HepG2 (cell line): ENCODE measurements at regions of chr13 and their contacts with region 1.

Region 1: GRCh38 chr13:39942552-39943273 is 287.3 kb downstream of the COG6 start:
- DNase-seq: peak; percentile 66
- ATAC-seq: peak; percentile 100
- H3K4me3 ChIP-seq: no peak overlapping the region
- H3K27ac ChIP-seq: no peak overlapping the region
- H3K4me1 ChIP-seq: no peaks in the 10 kb centered on the region
- H3K27me3 ChIP-seq: no peaks in the 10 kb centered on the region; a peak in 1 of 5 replicates
- CTCF ChIP-seq: peak; percentile 91
- EP300 ChIP-seq: no peak
- POLR2A ChIP-seq: no peak
- RAD21 ChIP-seq: peak; percentile 79

Region 2: DNA sequence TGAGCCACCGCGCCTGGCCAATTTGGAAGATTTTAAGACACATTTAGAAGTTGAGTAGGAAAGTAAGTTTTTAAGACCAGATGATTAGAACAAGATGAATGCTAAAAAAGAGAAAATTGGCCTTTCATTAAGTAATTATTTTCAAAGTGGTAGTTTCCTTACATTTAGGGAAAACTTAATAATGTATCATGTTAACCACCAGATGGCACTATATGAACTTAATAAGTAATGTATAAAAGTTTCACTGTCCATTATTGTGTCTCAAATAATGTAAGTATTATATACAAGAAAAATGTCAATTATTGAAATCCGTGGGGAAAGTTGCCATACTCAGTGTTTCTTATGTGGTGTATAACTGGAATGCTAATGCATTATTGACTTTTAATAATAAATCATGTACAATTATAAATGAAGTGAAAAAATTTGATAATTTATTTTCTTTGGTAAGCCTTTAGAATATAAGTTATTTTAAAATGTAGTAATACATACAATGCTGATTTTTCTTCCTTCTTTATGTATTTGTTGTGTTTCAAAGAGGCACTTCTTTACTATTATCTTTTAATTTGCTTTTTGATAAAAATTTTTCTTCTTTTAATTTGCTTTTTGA is 258.1 kb before region 1 on chr13:
- CTCF ChIA-PET with region 1: no interaction called
- POLR2A ChIA-PET with region 1: no interaction called
- in situ Hi-C with region 1: no loop called
- intact Hi-C with region 1: loop called (anchors 10 kb)
- DNase-seq: peak; percentile 31
- ATAC-seq: peak; percentile 44; the same call in 1 of the 3 replicates
- H3K4me3 ChIP-seq: no peak overlapping the region
- H3K27ac ChIP-seq: no peak overlapping the region
- H3K4me1 ChIP-seq: no peaks in the 10 kb centered on the region
- H3K27me3 ChIP-seq: no peaks in the 10 kb centered on the region
- CTCF ChIP-seq: peak; percentile 33
- EP300 ChIP-seq: no peak
- POLR2A ChIP-seq: no peak
- RAD21 ChIP-seq: no peak

Region 3: DNA sequence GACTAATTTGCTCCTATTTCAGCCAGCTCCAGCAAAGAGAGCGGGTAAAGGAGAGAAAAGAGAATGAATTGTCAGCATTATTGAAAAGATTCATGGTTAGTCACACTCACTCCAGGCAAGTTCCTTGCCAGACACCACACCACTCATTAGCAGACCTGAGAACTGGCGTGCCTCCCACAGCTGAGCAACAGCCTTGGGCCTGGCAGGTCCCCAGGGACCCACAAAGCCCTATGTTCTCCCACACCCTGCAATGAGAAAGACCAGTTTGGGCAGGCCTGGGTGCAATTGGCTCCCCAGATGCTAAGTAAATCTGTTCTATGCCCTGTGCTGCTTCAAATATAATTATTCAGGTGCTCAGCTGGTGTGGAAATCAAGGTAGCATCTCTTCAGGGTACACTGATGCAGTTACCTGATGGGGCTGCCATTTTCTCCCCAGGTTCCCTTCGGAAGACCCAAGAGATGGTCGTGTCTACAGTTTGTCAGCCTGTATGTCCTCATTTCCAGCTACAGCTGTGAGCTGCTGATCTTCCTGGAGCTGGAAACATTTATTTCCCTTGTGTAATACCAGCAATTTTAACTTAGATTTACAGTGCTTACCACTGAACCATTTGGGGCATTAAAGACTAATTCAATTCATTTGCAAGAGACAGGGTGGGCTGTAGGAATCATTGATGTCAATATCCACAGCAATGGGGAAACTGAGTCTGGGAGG is 117.7 kb after region 1 on chr13:
- CTCF ChIA-PET with region 1: no interaction called
- POLR2A ChIA-PET with region 1: interaction called, 3 read pairs
- in situ Hi-C with region 1: no loop called
- intact Hi-C with region 1: loop called (anchors 5 kb)
- DNase-seq: no peak
- ATAC-seq: 0 out of 3 replicates have a peak, but pooled peaks have one; percentile 12
- H3K4me3 ChIP-seq: no peak overlapping the region
- H3K27ac ChIP-seq: peak overlapping the region; percentile 3
- H3K4me1 ChIP-seq: peaks cover 68% of the 10 kb centered on the region
- H3K27me3 ChIP-seq: no peaks in the 10 kb centered on the region; a peak in 1 of 5 replicates
- CTCF ChIP-seq: no peak
- EP300 ChIP-seq: no peak
- POLR2A ChIP-seq: no peak
- RAD21 ChIP-seq: no peak

Region 4: GRCh38 chr13:40494513-40494912 is 551.8 kb after region 1 on chr13:
- CTCF ChIA-PET with region 1: no interaction called
- POLR2A ChIA-PET with region 1: no interaction called
- in situ Hi-C with region 1: no loop called
- intact Hi-C with region 1: no loop called
- DNase-seq: no peak
- ATAC-seq: no peak
- H3K4me3 ChIP-seq: no peak overlapping the region
- H3K27ac ChIP-seq: no peak overlapping the region
- H3K4me1 ChIP-seq: peaks cover 25% of the 10 kb centered on the region
- H3K27me3 ChIP-seq: no peaks in the 10 kb centered on the region
- CTCF ChIP-seq: no peak
- EP300 ChIP-seq: no peak
- POLR2A ChIP-seq: no peak
- RAD21 ChIP-seq: no peak

Region 5: GRCh38 chr13:40777166-40777808 is 834.6 kb after region 1 on chr13:
- CTCF ChIA-PET with region 1: interaction called, 6 read pairs
- POLR2A ChIA-PET with region 1: no interaction called
- in situ Hi-C with region 1: no loop called
- intact Hi-C with region 1: loop called (anchors 2 kb)
- DNase-seq: peak; percentile 71
- ATAC-seq: peak; percentile 86
- H3K4me3 ChIP-seq: peak overlapping the region; percentile 47 to 60 (median 59)
- H3K27ac ChIP-seq: peak overlapping the region; percentile 5
- H3K4me1 ChIP-seq: peaks cover 82% of the 10 kb centered on the region
- H3K27me3 ChIP-seq: no peaks in the 10 kb centered on the region
- CTCF ChIP-seq: peak; percentile 66
- EP300 ChIP-seq: no peak
- POLR2A ChIP-seq: no peak
- RAD21 ChIP-seq: no peak